ENCODE measurements at regions of chr3 and their contacts with region 1.

Region 1: DNA sequence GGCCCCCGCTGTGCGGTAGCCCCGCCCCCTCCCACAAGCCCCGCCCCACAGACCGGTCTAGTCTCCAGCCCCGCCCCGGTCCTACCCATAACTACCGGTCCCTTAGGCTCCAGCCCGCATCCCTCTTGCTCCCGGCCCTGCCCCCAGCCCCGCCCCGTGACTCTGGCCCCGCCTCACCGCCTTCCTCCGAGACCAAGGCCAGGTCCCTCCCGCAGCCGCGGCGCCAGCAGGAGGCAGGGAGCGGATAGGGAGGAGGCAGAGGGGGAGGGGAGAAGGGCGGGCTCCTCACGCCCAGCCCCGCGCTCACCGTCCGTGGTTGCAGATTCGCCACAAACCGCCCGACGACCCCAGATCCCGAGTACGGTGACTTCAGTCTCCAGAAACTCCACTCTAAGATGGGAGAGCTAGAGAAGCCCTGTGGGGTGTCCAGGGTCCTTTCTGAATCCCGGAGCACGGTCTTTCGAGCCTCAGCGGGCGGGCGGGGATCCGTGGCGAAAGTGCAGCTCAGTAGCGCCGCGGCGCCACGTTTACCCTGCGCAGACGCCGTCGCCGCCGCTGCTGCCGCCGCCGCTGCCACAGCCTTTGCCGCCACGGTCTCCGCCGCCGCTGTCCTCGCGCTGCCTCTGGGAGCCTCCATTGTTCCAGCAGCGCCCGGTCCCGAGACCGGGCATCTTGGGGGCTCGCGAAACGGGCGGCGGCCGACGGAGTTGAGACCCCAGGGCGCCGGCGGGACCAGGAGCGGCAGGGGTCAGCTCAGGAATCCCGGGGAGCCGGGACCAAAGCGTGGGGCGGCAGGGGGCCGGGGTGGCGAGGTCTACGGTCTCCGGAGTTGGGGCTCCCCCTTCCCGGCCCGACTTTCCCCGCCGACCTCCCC is at the start of gene BRPF1:
- DNase-seq: peak; percentile 99
- H3K4me3 ChIP-seq: peak within 1 kb of the TSS; percentile 75 to 90 (median 86)
- H3K27ac ChIP-seq: peak within 1 kb of the TSS; percentile 100
- H3K4me1 ChIP-seq: peaks cover 16% of the 10 kb centered on the region
- H3K27me3 ChIP-seq: peaks cover 0 to under 1% of the 10 kb centered on the region in 2 experiments
- CTCF ChIP-seq: no peak
- POLR2A ChIP-seq: no peak
- total RNA-seq, gene BRPF1: 23.2 and 26.2 TPM in 2 replicates

Region 2: DNA sequence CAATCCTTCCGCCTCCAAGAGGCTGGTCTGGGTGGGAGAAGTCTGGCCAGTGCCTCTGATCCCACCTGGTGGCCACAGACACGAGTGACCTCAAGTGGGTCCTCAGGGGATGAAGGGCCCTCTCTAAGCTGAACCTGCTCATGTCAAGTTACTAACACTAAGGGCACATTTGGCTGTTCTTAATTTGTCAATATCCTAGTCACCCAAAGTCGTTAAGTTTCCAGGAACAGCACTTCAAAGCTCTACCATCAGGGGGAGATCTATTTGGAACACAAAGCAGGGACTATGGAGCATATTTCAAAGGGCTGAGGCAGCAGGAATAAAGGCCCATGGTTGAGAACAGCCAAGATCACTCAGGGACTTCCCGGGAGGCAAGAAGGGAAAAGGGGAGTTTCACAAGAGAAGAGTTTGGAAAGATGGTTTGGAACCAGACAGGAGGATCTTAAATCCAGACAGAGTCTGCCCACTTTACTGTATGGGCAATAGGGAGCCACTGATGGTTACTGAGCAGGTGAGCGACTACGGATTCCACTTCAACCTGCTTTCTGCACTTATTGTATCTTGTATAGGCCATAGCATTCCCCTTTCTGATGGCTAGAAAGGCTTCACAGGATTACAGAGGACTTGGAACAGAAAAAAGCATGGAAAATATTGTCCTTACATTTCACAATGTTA is 975.7 kb before region 1 on chr3:
- CTCF ChIA-PET with region 1: no interaction called
- POLR2A ChIA-PET with region 1: no interaction called
- dilution Hi-C with region 1: no loop called
- intact Hi-C with region 1: no loop called
- DNase-seq: no peak
- H3K4me3 ChIP-seq: no peak overlapping the region
- H3K27ac ChIP-seq: no peak overlapping the region
- H3K4me1 ChIP-seq: no peaks in the 10 kb centered on the region
- H3K27me3 ChIP-seq: no peaks in the 10 kb centered on the region
- CTCF ChIP-seq: peak; percentile 12 to 13
- POLR2A ChIP-seq: no peak

Region 3: GRCh38 chr3:9280451-9281219 is 450.8 kb before region 1 on chr3:
- CTCF ChIA-PET with region 1: no interaction called
- POLR2A ChIA-PET with region 1: no interaction called
- dilution Hi-C with region 1: no loop called
- intact Hi-C with region 1: no loop called
- DNase-seq: no peak
- H3K4me3 ChIP-seq: no peak overlapping the region
- H3K27ac ChIP-seq: no peak overlapping the region
- H3K4me1 ChIP-seq: no peaks in the 10 kb centered on the region
- H3K27me3 ChIP-seq: no peaks in the 10 kb centered on the region
- CTCF ChIP-seq: no peak
- POLR2A ChIP-seq: no peak

Region 4: GRCh38 chr3:9396700-9397521 is 334.5 kb before region 1 on chr3:
- CTCF ChIA-PET with region 1: interaction called, 4 read pairs
- POLR2A ChIA-PET with region 1: no interaction called
- dilution Hi-C with region 1: no loop called
- intact Hi-C with region 1: loop called (anchors 2 kb)
- DNase-seq: peak; percentile 99
- H3K4me3 ChIP-seq: peak overlapping the region; percentile 8 to 93 (median 43)
- H3K27ac ChIP-seq: peak overlapping the region; percentile 93
- H3K4me1 ChIP-seq: peaks cover 56% of the 10 kb centered on the region
- H3K27me3 ChIP-seq: no peaks in the 10 kb centered on the region
- CTCF ChIP-seq: no peak
- POLR2A ChIP-seq: peak; percentile 84

Region 5: DNA sequence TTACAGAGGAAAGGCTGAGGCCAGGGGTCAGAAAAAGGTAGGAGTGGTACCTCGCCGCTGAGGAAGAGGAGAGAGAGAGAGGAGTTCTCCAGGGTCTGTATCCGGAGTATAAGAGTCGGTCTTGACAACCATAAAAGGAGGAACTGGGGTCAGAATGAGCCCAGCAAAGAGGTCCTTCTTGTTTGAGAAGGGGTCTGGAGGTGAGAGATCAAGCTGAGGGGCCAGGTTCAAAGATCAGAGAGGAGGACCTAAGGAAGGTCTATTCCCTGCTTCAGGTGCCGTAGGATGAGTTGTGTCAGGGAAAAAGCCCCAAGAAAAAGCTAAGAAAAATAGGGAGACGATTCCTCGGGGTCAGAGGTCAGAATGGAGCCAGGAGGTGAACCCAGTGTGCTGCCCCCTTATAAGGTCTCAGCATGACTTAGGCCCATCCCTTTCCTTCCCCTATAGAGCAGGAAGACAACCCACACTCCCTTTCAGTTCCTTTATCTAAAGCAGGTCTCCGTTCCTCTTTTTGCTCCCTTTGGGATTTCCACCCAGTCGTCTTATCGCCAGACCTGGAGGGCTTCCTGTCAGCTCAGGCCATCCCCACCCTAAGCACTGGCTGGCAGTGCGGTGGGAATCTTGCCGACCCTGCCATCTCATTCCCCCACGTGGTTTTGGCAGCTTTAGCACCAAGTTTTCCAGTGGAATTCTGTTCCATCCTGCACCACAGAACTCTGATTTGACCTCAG is 81.5 kb before region 1 on chr3:
- CTCF ChIA-PET with region 1: no interaction called
- POLR2A ChIA-PET with region 1: no interaction called
- dilution Hi-C with region 1: no loop called
- intact Hi-C with region 1: loop called (anchors 1 kb)
- DNase-seq: no peak
- H3K4me3 ChIP-seq: peak overlapping the region; percentile 50 to 80 (median 77)
- H3K27ac ChIP-seq: peak overlapping the region; percentile 34
- H3K4me1 ChIP-seq: peaks cover 5% of the 10 kb centered on the region
- H3K27me3 ChIP-seq: no peaks in the 10 kb centered on the region
- CTCF ChIP-seq: no peak
- POLR2A ChIP-seq: no peak

Region 6: GRCh38 chr3:9715764-9716437 is 15.5 kb before region 1 on chr3:
- CTCF ChIA-PET with region 1: interaction called, 27 read pairs
- POLR2A ChIA-PET with region 1: interaction called, 3 read pairs
- dilution Hi-C with region 1: no loop called
- intact Hi-C with region 1: loop called (anchors 1 kb)
- DNase-seq: peak; percentile 89
- H3K4me3 ChIP-seq: no peak overlapping the region
- H3K27ac ChIP-seq: no peak overlapping the region
- H3K4me1 ChIP-seq: no peaks in the 10 kb centered on the region
- H3K27me3 ChIP-seq: peaks cover 3 to 5% of the 10 kb centered on the region in 2 experiments
- CTCF ChIP-seq: peak; percentile 75 to 77
- POLR2A ChIP-seq: no peak

Region 7: GRCh38 chr3:9769426-9770275 is 38.2 kb after region 1 on chr3 and contains the start of gene CAMK1:
- CTCF ChIA-PET with region 1: no interaction called
- POLR2A ChIA-PET with region 1: no interaction called
- dilution Hi-C with region 1: no loop called
- intact Hi-C with region 1: loop called (anchors 1 kb)
- DNase-seq: peak; percentile 75
- H3K4me3 ChIP-seq: peak within 1 kb of the TSS; percentile 60 to 65 (median 62)
- H3K27ac ChIP-seq: peak within 1 kb of the TSS; percentile 27
- H3K4me1 ChIP-seq: peaks cover 18% of the 10 kb centered on the region
- H3K27me3 ChIP-seq: no peaks in the 10 kb centered on the region
- CTCF ChIP-seq: no peak
- POLR2A ChIP-seq: peak; percentile 79
- total RNA-seq, gene CAMK1: 23.5 and 25.7 TPM in 2 replicates

Region 8: DNA sequence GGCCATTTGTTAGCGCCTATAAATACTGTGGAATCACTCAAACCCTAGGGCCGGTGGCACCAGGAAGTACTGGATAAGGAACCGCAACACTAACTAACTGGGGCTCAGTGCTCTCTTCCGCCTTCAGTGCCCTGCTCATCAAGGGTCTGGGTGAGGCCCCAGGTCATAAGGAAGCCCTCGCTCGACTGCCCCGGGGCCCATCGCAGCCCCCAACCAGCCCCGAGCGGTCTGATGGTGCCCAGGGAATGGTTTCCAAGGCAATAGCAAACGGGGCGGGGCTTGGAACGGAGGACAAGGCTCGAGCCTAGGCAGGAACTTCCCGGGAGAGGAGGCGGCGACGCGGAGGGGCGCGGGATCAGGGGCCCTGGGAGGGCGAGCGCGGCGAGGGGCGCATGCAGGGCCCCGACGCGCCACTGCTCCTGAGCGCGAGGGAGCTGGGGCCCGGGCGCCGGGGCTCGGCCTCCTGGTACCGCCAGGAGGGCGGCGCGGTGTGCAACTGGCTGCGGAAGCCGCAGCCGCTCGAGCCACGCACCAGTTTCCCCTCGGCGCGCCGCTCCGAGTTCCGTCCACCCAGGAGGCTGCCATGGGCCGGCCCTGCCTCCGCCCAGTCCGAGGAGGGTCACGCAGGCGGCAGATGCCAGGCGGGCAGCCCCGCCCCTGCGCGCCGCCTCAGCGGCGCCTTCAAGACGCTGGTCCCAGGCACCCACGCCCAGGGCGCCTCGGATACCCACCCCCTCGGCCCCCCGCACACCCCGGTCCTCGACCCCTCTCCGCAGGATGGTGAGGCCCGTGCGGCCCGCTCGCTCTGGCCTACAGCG is 78.4 kb after region 1 on chr3 and contains the start of gene TTLL3:
- CTCF ChIA-PET with region 1: no interaction called
- POLR2A ChIA-PET with region 1: no interaction called
- dilution Hi-C with region 1: no loop called
- intact Hi-C with region 1: loop called (anchors 1 kb)
- DNase-seq: peak; percentile 53
- H3K4me3 ChIP-seq: peak within 1 kb of the TSS; percentile 52 to 64 (median 55)
- H3K27ac ChIP-seq: peak within 1 kb of the TSS; percentile 36
- H3K4me1 ChIP-seq: peaks cover 12% of the 10 kb centered on the region
- H3K27me3 ChIP-seq: no peaks in the 10 kb centered on the region
- CTCF ChIP-seq: peak in 1 of 2 donors; percentile 5
- POLR2A ChIP-seq: peak; percentile 72
- total RNA-seq, gene TTLL3: 41.8 and 43.5 TPM in 2 replicates